ENCODE measurements at regions of chr14 and their contacts with region 1.

Region 1: GRCh38 chr14:65444230-65444629 is 31.7 kb downstream of the FUT8 start:
- DNase-seq: no peak
- H3K4me3 ChIP-seq: no peak overlapping the region
- H3K27ac ChIP-seq: no peak overlapping the region
- H3K4me1 ChIP-seq: no peaks in the 10 kb centered on the region
- H3K27me3 ChIP-seq: no peaks in the 10 kb centered on the region
- CTCF ChIP-seq: no peak
- EP300 ChIP-seq: no peak
- POLR2A ChIP-seq: no peak

Region 2: GRCh38 chr14:65287264-65288131 is 156.7 kb before region 1 on chr14:
- in situ Hi-C with region 1: no loop called
- intact Hi-C with region 1: no loop called
- DNase-seq: peak; percentile 51
- H3K4me3 ChIP-seq: no peak overlapping the region
- H3K27ac ChIP-seq: peak overlapping the region; percentile 39 to 61 (median 53)
- H3K4me1 ChIP-seq: peaks cover 0 to 14% (median 2%) of the 10 kb centered on the region in 4 donors
- H3K27me3 ChIP-seq: no peaks in the 10 kb centered on the region
- CTCF ChIP-seq: no peak
- EP300 ChIP-seq: no peak
- POLR2A ChIP-seq: no peak

Region 3: DNA sequence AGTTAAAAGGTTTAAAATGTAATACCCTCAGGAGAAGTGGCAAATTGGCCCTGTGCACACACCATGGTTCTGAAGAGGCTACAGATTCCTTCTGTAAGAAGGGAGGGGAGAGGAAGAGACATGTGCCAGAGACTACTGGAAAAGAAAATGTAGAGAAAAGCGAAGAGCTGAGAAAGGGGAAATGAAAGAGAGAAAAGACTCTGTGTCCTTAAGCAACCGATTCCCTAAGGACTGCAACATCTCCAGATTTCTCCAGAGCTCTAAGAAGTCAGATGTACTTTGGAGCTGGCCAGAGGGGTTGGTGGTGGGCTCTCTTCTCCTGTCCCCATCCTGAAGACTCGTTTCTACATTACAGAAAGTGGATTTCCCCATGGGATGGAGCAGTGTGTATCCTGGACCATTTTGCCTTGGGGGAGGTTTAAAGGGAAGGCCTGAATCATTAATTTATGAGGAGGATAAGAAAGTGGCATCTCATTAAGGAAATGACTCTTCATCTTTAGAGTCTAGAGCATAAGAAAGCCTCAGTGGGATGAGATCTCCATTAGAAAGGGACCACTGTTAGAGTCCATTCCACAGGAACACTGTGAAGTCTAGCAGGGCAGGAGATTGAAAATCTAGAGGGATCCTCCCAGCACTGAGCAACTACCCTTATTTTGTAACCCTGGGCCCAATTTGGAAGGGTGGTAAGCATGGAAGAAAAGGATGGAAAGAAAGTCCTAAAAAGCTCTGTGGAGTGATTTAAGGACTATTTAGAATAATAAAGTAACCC is 77.2 kb before region 1 on chr14:
- in situ Hi-C with region 1: no loop called
- intact Hi-C with region 1: loop called (anchors 2 kb)
- DNase-seq: no peak
- H3K4me3 ChIP-seq: no peak overlapping the region
- H3K27ac ChIP-seq: no peak overlapping the region
- H3K4me1 ChIP-seq: no peaks in the 10 kb centered on the region
- H3K27me3 ChIP-seq: no peaks in the 10 kb centered on the region
- CTCF ChIP-seq: no peak
- EP300 ChIP-seq: no peak
- POLR2A ChIP-seq: no peak

Region 4: DNA sequence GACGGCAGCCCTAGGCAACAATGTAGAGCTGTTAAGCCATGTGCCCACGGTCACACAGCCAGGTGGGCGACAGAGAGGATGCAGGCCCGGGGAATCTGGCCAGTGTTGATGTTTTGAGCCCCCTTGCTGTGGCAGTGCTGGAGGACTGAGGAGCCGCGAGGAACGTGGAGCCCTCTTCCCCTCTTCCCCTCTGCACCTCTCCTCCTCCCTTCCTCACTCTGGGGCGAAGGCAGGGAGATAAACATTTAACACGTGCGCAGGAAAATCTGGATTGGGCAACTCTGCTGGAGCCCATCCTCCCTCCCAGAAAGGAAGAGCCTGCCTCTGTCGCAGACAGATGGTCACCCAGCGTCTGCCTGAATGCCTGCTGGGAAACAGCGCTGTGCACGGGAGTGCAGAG is 345.1 kb after region 1 on chr14:
- in situ Hi-C with region 1: no loop called
- intact Hi-C with region 1: no loop called
- DNase-seq: no peak
- H3K4me3 ChIP-seq: no peak overlapping the region
- H3K27ac ChIP-seq: no peak overlapping the region
- H3K4me1 ChIP-seq: no peaks in the 10 kb centered on the region
- H3K27me3 ChIP-seq: no peaks in the 10 kb centered on the region
- CTCF ChIP-seq: no peak
- EP300 ChIP-seq: no peak
- POLR2A ChIP-seq: no peak